ENCODE measurements at regions of chr11 and their contacts with region 1.

Region 1: DNA sequence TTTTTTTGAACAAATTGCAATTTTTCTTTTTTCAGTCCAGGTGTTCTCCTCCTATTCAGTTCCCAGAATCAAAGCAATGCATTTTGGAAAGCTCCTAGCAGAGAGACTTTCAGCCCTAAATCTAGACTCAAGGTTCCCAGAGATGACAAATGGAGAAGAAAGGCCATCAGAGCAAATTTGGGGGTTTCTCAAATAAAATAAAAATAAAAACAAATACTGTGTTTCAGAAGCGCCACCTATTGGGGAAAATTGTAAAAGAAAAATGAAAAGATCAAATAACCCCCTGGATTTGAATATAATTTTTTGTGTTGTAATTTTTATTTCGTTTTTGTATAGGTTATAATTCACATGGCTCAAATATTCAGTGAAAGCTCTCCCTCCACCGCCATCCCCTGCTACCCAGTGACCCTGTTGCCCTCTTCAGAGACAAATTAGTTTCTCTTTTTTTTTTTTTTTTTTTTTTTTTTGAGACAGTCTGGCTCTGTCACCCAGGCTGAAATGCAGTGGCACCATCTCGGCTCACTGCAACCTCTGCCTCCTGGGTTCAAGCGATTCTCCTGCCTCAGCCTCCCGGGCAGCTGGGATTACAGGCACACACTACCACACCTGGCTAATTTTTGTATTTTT is 6.2 kb upstream of the UBE4A start:
- DNase-seq: no peak
- ATAC-seq: no peak
- H3K4me3 ChIP-seq: no peak overlapping the region
- H3K27ac ChIP-seq: no peak overlapping the region
- H3K4me1 ChIP-seq: no peaks in the 10 kb centered on the region
- H3K27me3 ChIP-seq: peaks cover 0 to 14% (median 0%) of the 10 kb centered on the region in 9 donors
- CTCF ChIP-seq: peak; percentile 24 to 72 (median 58)
- POLR2A ChIP-seq: no peak

Region 2: DNA sequence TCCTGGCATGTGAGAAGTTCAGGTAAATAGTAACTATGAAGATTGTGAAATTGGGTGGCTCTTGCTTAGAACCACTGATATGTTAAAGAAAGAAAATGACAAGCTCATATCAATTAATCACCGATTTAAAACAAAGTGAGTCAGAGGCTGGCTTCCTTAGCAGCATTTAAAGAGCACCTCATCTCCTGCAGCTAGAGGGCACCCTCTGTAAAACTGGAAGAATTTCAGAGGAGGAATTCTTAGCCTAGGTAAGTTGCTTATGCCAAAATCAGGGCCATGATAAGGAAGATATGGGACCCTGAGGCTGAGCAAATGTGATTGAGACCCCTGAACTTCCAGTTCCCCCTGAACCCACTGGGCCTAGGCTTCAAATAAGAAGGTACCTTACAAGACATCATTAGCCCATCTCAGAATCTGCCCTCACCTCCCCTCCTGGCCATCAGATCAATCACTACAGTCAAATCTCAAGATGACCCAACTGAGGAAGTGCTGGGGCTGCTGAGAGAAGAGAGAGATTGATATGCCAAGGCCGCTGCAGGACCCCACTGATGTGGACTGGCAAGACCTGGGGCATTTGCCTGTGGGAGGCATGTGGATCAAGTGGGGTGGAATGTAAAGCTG is 57.3 kb before region 1 on chr11:
- intact Hi-C with region 1: loop called in 7 of 10 experiments (anchors 5 kb)
- DNase-seq: no peak
- ATAC-seq: peak in 1 of 4 donors; percentile 47
- H3K4me3 ChIP-seq: no peak overlapping the region
- H3K27ac ChIP-seq: no peak overlapping the region
- H3K4me1 ChIP-seq: no peaks in the 10 kb centered on the region
- H3K27me3 ChIP-seq: no peaks in the 10 kb centered on the region
- CTCF ChIP-seq: peak; percentile 27 to 67 (median 52)
- POLR2A ChIP-seq: no peak

Region 3: GRCh38 chr11:118304568-118305248 is 48.5 kb before region 1 on chr11 and contains the start of gene CD3E:
- intact Hi-C with region 1: loop called in 7 of 10 experiments (anchors 5 kb)
- DNase-seq: no peak
- ATAC-seq: no peak
- H3K4me3 ChIP-seq: peak within 1 kb of the TSS in 2 of 12 donors; percentile 12 to 56
- H3K27ac ChIP-seq: peak within 1 kb of the TSS in 2 of 12 donors; percentile 13 to 84
- H3K4me1 ChIP-seq: no peaks in the 10 kb centered on the region
- H3K27me3 ChIP-seq: peaks cover 0 to 14% (median 0%) of the 10 kb centered on the region in 9 donors
- CTCF ChIP-seq: no peak
- POLR2A ChIP-seq: no peak
- total RNA-seq, gene CD3E: 0.17 to 12.0 (median 0.57) TPM in 8 of 9 donors, not detected in the other